Psoas muscle (tissue), 8 donors: ENCODE measurements at regions of chr9 and their contacts with region 1.

Region 1: DNA sequence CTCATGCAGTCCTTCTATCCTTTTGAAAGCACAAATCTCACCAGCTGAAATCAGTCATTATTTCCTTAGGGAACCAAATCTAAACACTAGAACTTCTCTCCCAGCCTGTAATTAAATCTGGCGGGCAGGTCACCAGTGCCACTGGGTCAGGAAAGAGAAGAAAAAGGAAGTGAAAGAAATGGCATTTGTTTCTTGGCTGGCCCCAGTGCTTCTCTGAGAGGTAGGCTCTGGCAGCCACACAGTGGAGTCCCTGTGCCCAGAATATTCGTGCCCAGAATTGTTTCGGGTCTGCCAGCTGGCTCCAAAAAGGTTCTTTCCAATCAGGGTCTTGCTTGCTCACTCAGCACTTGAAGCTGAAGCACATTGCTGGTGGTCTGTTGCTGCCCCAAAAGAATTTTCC is 133.9 kb upstream of the MTAP start:
- DNase-seq: no peak
- ATAC-seq: no peak
- H3K4me3 ChIP-seq: no peak overlapping the region
- H3K27ac ChIP-seq: no peak overlapping the region
- H3K4me1 ChIP-seq: no peaks in the 10 kb centered on the region
- H3K27me3 ChIP-seq: no peaks in the 10 kb centered on the region
- CTCF ChIP-seq: no peak

Region 2: DNA sequence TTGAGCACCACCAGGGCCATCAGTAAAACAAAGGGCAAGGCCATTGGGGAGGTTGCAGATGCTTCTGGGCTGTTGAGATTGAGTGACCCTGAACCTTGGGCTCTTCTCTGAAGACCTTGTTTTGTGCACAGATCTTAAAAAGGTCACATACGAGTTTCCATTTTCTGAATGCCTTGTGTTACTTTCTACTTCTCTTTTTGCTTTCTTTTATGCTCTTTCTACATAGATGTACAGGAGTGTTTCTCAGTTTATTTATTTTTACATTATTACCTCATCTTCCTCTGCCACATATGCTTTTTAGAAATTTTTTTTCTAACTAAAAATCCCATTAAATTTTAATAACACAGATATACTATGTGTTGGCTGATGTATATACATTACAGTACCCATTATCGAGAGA is 363.3 kb before region 1 on chr9 and contains the start of gene IFNA5:
- intact Hi-C with region 1: loop called in 1 of 2 experiments (anchors 5 kb)
- DNase-seq: no peak
- ATAC-seq: no peak
- H3K4me3 ChIP-seq: no peak within 1 kb of the TSS
- H3K27ac ChIP-seq: no peak within 1 kb of the TSS
- H3K4me1 ChIP-seq: no peaks in the 10 kb centered on the region
- H3K27me3 ChIP-seq: peaks cover 0 to 6% (median 3%) of the 10 kb centered on the region in 3 donors
- CTCF ChIP-seq: no peak
- total RNA-seq, gene IFNA5: not detected